H1 (cell line): ENCODE measurements at regions of chr16 and their contacts with region 1.

Region 1: GRCh38 chr16:30657866-30658730 is at the start of gene FBRS:
- DNase-seq: peak; percentile 98 to 100
- H3K4me3 ChIP-seq: peak within 1 kb of the TSS; percentile 61 to 96 (median 78)
- H3K27ac ChIP-seq: peak within 1 kb of the TSS; percentile 91
- H3K4me1 ChIP-seq: peaks cover 2 to 13% (median 6%) of the 10 kb centered on the region in 4 experiments; a peak in 6 of 7 replicates
- H3K27me3 ChIP-seq: peaks cover 2 to 35% (median 22%) of the 10 kb centered on the region in 4 experiments
- CTCF ChIP-seq: peak; percentile 74 to 79 (median 77)
- EP300 ChIP-seq: peak in 1 of 2 experiments; percentile 69; a peak in 1 of 3 replicates
- POLR2A ChIP-seq: 0 out of 3 replicates have a peak, but pooled peaks of 1 of the 2 experiments have one; percentile 43
- RAD21 ChIP-seq: peak; percentile 46 to 61
- total RNA-seq, gene FBRS: 12.9 and 13.9 TPM in 2 replicates

Region 2: GRCh38 chr16:30491744-30492308 is 166.3 kb before region 1 on chr16:
- CTCF ChIA-PET with region 1: no interaction called
- POLR2A ChIA-PET with region 1: no interaction called
- DNase-seq: no peak
- H3K4me3 ChIP-seq: no peak overlapping the region
- H3K27ac ChIP-seq: no peak overlapping the region
- H3K4me1 ChIP-seq: peaks cover 0 to 3% (median 1%) of the 10 kb centered on the region in 4 experiments; a peak in 1 of 7 replicates
- H3K27me3 ChIP-seq: peaks cover 0 to 2% (median 0%) of the 10 kb centered on the region in 4 experiments; a peak in 1 of 7 replicates
- CTCF ChIP-seq: no peak
- EP300 ChIP-seq: no peak
- POLR2A ChIP-seq: no peak
- RAD21 ChIP-seq: no peak

Region 3: GRCh38 chr16:30677931-30678585 is 20.0 kb after region 1 on chr16:
- CTCF ChIA-PET with region 1: interaction called, 8 read pairs
- POLR2A ChIA-PET with region 1: interaction called, 12 read pairs
- DNase-seq: peak; percentile 71 to 87
- H3K4me3 ChIP-seq: no peak overlapping the region
- H3K27ac ChIP-seq: no peak overlapping the region
- H3K4me1 ChIP-seq: peaks cover 0 to 3% (median 3%) of the 10 kb centered on the region in 4 experiments; a peak in 4 of 7 replicates
- H3K27me3 ChIP-seq: peaks cover 76 to 95% (median 94%) of the 10 kb centered on the region in 4 experiments
- CTCF ChIP-seq: no peak
- EP300 ChIP-seq: peak in 1 of 2 experiments; percentile 62; a peak in 1 of 3 replicates
- POLR2A ChIP-seq: no peak
- RAD21 ChIP-seq: no peak